GM23248 (cell line): ENCODE measurements at regions of chr1 and their contacts with region 1.

Region 1: GRCh38 chr1:233790662-233791375 is 113.7 kb upstream of the SLC35F3 start:
- DNase-seq: peak; percentile 79
- H3K4me3 ChIP-seq: no peak overlapping the region
- H3K27ac ChIP-seq: no peak overlapping the region
- H3K4me1 ChIP-seq: no peaks in the 10 kb centered on the region
- H3K27me3 ChIP-seq: 0 out of 2 replicates have a peak, but pooled peaks cover 3% of the 10 kb centered on the region

Region 2: DNA sequence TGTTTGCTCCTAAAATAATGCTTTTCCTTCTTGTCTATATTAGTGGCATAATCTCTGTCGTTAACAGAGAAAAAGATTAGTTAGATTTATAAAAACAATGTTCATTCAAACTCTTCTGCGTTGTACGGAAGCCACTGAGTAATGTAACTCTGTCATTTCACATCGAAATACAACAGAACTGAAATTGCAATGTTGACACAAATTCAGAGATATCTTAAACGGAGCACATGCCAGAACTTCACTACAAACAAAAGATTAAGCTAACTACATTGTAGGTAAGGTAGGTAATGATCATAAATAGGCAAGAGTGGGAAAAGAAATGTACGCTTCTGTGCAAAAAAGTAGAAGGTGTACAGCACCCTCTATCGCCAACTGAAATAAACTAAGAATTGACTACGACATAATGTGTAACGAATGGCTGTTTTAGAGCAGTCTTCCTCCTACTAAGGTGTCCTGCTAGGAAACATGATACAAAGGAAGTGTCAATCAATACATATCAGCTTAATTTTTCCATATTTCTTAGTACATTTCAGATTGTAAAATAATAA is 551.9 kb before region 1 on chr1:
- in situ Hi-C with region 1: no loop called
- DNase-seq: no peak
- H3K4me3 ChIP-seq: no peak overlapping the region
- H3K27ac ChIP-seq: no peak overlapping the region
- H3K4me1 ChIP-seq: 0 out of 2 replicates have a peak, but pooled peaks cover 8% of the 10 kb centered on the region
- H3K27me3 ChIP-seq: no peaks in the 10 kb centered on the region

Region 3: GRCh38 chr1:233435622-233436021 is 355.2 kb before region 1 on chr1:
- in situ Hi-C with region 1: loop called (anchors 10 kb)
- DNase-seq: no peak
- H3K4me3 ChIP-seq: no peak overlapping the region
- H3K27ac ChIP-seq: no peak overlapping the region
- H3K4me1 ChIP-seq: no peaks in the 10 kb centered on the region
- H3K27me3 ChIP-seq: peaks cover 8% of the 10 kb centered on the region; the same call in 1 of the 2 replicates

Region 4: DNA sequence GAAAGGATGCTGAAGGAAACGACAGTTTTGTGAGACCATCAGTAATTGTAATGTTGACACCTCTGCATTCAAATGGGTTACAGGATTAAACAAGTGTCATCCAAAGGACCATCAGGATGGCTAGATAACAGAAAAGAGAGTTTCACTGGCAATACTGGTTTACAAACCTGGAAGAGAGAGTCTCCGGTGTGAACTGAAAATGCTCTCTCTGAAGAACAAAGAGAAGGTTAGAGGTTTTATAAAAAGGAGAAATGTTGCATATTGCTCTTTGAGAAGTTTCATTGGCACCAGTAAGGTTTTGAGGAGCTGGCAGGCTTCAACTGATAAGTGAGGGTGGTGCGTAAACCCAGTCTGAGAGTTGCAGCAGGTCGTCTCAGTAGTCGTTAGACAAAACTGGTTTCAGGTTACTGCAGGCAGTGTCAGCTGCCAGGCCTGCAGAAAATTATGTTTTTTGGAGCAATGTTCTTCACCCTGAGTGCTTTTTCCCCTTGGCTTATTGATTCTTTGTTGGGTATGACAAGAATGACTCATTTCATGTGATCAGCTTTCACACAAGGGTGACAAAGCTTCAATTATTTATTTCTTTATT is 134.7 kb before region 1 on chr1:
- in situ Hi-C with region 1: no loop called
- DNase-seq: no peak
- H3K4me3 ChIP-seq: no peak overlapping the region
- H3K27ac ChIP-seq: no peak overlapping the region
- H3K4me1 ChIP-seq: 0 out of 2 replicates have a peak, but pooled peaks cover 4% of the 10 kb centered on the region
- H3K27me3 ChIP-seq: no peaks in the 10 kb centered on the region

Region 5: GRCh38 chr1:233721141-233721547 is 69.7 kb before region 1 on chr1:
- in situ Hi-C with region 1: no loop called
- DNase-seq: no peak
- H3K4me3 ChIP-seq: no peak overlapping the region
- H3K27ac ChIP-seq: no peak overlapping the region
- H3K4me1 ChIP-seq: no peaks in the 10 kb centered on the region
- H3K27me3 ChIP-seq: no peaks in the 10 kb centered on the region